Endothelial cell of umbilical vein (primary cell): ENCODE measurements at regions of chr11 and their contacts with region 1.

Region 1: GRCh38 chr11:44286268-44286880 is 23.6 kb downstream of the ALX4 start:
- DNase-seq: peak; percentile 41
- H3K4me3 ChIP-seq: no peak overlapping the region
- H3K27ac ChIP-seq: no peak overlapping the region
- H3K4me1 ChIP-seq: no peaks in the 10 kb centered on the region
- H3K27me3 ChIP-seq: no peaks in the 10 kb centered on the region
- CTCF ChIP-seq: peak; percentile 93 to 95
- POLR2A ChIP-seq: no peak

Region 2: GRCh38 chr11:44110231-44110679 is 176.1 kb before region 1 on chr11:
- CTCF ChIA-PET with region 1: interaction called, 8 read pairs
- POLR2A ChIA-PET with region 1: no interaction called
- dilution Hi-C with region 1: no loop called
- intact Hi-C with region 1: loop called (anchors 1 kb)
- DNase-seq: peak; percentile 74
- H3K4me3 ChIP-seq: no peak overlapping the region
- H3K27ac ChIP-seq: no peak overlapping the region
- H3K4me1 ChIP-seq: no peaks in the 10 kb centered on the region
- H3K27me3 ChIP-seq: no peaks in the 10 kb centered on the region
- CTCF ChIP-seq: peak; percentile 76 to 79
- POLR2A ChIP-seq: no peak

Region 3: GRCh38 chr11:44190868-44191200 is 95.5 kb before region 1 on chr11:
- CTCF ChIA-PET with region 1: no interaction called
- POLR2A ChIA-PET with region 1: no interaction called
- dilution Hi-C with region 1: no loop called
- intact Hi-C with region 1: no loop called
- DNase-seq: no peak
- H3K4me3 ChIP-seq: no peak overlapping the region
- H3K27ac ChIP-seq: no peak overlapping the region
- H3K4me1 ChIP-seq: no peaks in the 10 kb centered on the region
- H3K27me3 ChIP-seq: no peaks in the 10 kb centered on the region
- CTCF ChIP-seq: no peak
- POLR2A ChIP-seq: no peak

Region 4: DNA sequence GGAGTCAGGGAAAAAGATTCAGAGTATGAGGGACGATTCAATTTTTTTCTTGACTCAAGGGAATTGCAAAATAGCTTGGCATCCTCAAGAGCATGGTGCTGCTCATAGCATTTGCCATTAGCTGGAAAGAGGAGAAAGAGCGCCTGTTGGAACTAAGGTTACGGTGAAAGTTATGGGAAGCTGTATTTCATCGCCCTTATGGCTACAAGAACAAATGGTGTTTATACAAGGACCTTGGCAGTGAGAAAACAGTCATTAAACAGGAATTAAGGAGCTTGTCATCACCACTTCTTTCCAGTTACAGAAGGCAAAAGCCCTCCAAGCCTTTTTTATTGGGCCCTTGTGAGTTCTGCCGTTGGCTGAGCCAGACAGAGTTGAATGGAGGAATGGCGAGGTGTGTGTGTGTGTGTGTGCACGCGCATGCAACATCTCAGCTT is 50.6 kb before region 1 on chr11:
- CTCF ChIA-PET with region 1: interaction called, 14 read pairs
- POLR2A ChIA-PET with region 1: no interaction called
- dilution Hi-C with region 1: no loop called
- intact Hi-C with region 1: no loop called
- DNase-seq: no peak
- H3K4me3 ChIP-seq: no peak overlapping the region
- H3K27ac ChIP-seq: no peak overlapping the region
- H3K4me1 ChIP-seq: no peaks in the 10 kb centered on the region
- H3K27me3 ChIP-seq: no peaks in the 10 kb centered on the region
- CTCF ChIP-seq: no peak
- POLR2A ChIP-seq: no peak

Region 5: DNA sequence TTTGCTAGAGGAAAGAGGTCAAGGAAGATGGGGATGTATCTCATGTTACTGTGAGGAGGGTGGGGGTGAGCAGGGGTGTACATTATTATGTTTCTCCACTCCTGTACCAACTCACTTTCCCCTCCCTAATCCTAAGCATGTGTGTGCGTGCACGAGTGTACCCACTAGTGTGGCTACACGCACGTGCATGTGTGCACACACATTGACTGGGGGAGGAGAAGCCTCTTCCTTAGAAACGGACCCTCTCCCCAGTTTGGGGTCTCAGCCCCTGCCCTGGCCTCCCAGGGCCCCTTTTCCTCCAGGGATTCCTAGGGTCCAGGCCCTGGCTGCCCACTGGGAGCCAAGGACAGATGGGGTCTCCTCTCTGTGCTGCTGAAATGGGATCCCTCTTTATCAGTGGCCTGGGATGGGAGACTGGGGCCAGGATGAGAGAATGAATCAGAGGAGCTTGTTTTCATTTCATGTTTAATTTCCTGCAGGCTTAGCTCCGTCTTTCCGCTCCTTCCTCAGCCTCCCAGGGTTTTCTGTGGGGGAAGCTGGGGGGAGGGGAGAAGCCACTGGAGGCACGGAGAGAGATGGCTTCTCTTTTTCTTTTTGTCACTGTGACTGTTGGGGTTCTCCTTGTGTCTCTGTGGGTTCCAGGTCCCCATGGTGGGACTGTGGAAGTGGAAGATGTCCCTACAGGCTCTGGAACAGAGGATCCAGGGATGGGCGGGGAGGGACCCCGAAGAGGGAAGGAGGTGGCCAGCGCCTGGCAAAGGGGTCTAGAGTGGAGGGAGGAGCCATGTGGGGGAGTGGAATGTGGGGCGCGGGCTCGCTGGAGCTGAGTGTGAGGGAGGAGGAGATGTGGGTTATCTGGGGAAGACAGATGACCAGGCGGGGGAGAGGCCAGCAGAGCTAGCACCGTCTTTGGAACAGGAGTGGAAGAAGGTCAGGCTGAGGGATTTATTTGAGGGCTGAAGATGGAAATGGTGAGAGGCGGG is 16.7 kb before region 1 on chr11:
- CTCF ChIA-PET with region 1: interaction called, 20 read pairs
- POLR2A ChIA-PET with region 1: no interaction called
- dilution Hi-C with region 1: no loop called
- intact Hi-C with region 1: no loop called
- DNase-seq: peak; percentile 79
- H3K4me3 ChIP-seq: peak overlapping the region in 1 of 3 experiments; percentile 30
- H3K27ac ChIP-seq: peak overlapping the region; percentile 87
- H3K4me1 ChIP-seq: peaks cover 20% of the 10 kb centered on the region
- H3K27me3 ChIP-seq: no peaks in the 10 kb centered on the region
- CTCF ChIP-seq: no peak
- POLR2A ChIP-seq: no peak

Region 6: GRCh38 chr11:44305470-44306051 is 19.2 kb after region 1 on chr11:
- CTCF ChIA-PET with region 1: interaction called, 8 read pairs
- POLR2A ChIA-PET with region 1: no interaction called
- dilution Hi-C with region 1: no loop called
- intact Hi-C with region 1: loop called (anchors 2 kb)
- DNase-seq: peak; percentile 14
- H3K4me3 ChIP-seq: peak overlapping the region; percentile 43 to 72 (median 55)
- H3K27ac ChIP-seq: no peak overlapping the region
- H3K4me1 ChIP-seq: peaks cover 7% of the 10 kb centered on the region
- H3K27me3 ChIP-seq: peaks cover 88 to 89% of the 10 kb centered on the region in 2 experiments
- CTCF ChIP-seq: no peak
- POLR2A ChIP-seq: no peak

Region 7: DNA sequence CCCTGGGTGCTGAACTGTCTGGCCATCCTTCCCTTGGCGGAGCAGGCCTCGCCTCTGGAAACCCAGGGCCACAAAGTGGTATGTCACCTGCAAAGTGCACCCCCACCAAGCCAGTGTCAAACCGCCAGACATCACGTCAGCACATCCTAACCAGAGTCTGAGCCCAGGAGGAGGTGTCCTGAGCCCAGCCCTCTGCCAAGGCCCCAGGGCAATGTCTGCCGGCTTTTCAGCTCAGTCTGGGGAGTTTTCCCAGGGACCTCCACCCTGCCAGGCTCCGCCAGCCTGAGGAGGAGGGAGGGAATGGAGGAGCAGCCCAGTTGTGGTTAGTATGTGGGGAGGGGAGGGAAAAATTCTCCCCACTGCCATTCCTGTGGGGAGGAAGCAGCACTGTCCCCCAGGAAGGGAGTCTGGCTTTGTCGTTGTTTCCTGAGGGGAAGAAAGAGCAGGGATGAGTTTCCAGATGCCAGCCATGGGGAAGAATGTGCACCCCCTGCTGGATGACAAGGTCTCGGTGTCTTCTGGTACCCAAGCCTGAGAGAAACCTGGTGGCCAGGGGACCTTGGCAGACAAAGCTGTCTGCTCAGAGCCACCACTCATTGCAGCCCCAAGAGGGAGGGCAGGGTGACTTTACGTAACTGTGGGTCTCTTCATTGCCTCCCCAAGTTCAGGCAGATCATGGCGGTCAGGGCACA is 197.7 kb after region 1 on chr11:
- CTCF ChIA-PET with region 1: interaction called, 12 read pairs
- POLR2A ChIA-PET with region 1: no interaction called
- dilution Hi-C with region 1: no loop called
- intact Hi-C with region 1: no loop called
- DNase-seq: peak; percentile 12
- H3K4me3 ChIP-seq: no peak overlapping the region
- H3K27ac ChIP-seq: no peak overlapping the region
- H3K4me1 ChIP-seq: no peaks in the 10 kb centered on the region
- H3K27me3 ChIP-seq: peaks cover 0 to 1% of the 10 kb centered on the region in 2 experiments
- CTCF ChIP-seq: peak; percentile 29 to 51
- POLR2A ChIP-seq: no peak